ENCODE measurements at regions of chr12 and their contacts with region 1.

Region 1: GRCh38 chr12:121334513-121335343 is 17.5 kb downstream of the ANAPC5 start:
- DNase-seq: peak in 1 of 2 donors; percentile 75
- ATAC-seq: peak; percentile 87 to 98 (median 91)
- H3K4me3 ChIP-seq: no peak overlapping the region
- H3K4me3 Mint-ChIP-seq: no peak overlapping the region
- H3K27ac ChIP-seq: no peak overlapping the region
- H3K27ac Mint-ChIP-seq: peak overlapping the region; percentile 69 to 70
- H3K4me1 ChIP-seq: no peaks in the 10 kb centered on the region
- H3K4me1 Mint-ChIP-seq: peaks cover 0 to 7% of the 10 kb centered on the region in 2 donors
- H3K27me3 ChIP-seq: no peaks in the 10 kb centered on the region
- H3K27me3 Mint-ChIP-seq: no peaks in the 10 kb centered on the region
- CTCF ChIP-seq: peak; percentile 89

Region 2: DNA sequence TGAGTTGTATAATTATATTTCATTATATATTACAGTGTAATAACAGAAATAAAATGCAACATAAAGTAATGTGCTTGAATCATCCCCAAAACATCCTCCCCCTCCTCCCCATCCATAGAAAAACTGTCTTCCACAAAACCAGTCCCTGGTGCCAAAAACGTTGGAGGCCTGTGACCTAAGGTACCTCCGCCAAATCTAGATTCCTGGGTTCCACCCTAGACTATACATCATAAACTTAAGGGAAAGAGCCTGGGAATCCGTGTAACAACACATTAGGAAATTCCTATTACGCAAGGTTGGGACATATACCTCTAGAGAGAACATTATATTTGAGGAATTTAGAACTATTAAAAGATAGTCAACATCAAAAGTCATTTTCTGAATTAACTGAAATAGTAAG is 468.6 kb before region 1 on chr12:
- intact Hi-C with region 1: no loop called
- DNase-seq: no peak
- ATAC-seq: no peak
- H3K4me3 ChIP-seq: no peak overlapping the region
- H3K4me3 Mint-ChIP-seq: no peak overlapping the region
- H3K27ac ChIP-seq: no peak overlapping the region
- H3K27ac Mint-ChIP-seq: no peak overlapping the region
- H3K4me1 ChIP-seq: no peaks in the 10 kb centered on the region
- H3K4me1 Mint-ChIP-seq: peaks cover 39 to 47% of the 10 kb centered on the region in 2 donors
- H3K27me3 ChIP-seq: no peaks in the 10 kb centered on the region
- H3K27me3 Mint-ChIP-seq: no peaks in the 10 kb centered on the region
- CTCF ChIP-seq: no peak

Region 3: GRCh38 chr12:121388421-121388981 is 53.8 kb after region 1 on chr12:
- intact Hi-C with region 1: no loop called
- DNase-seq: no peak
- ATAC-seq: no peak
- H3K4me3 ChIP-seq: no peak overlapping the region
- H3K4me3 Mint-ChIP-seq: no peak overlapping the region
- H3K27ac ChIP-seq: no peak overlapping the region
- H3K27ac Mint-ChIP-seq: no peak overlapping the region
- H3K4me1 ChIP-seq: peaks cover 7% of the 10 kb centered on the region
- H3K4me1 Mint-ChIP-seq: peaks cover 5 to 10% of the 10 kb centered on the region in 2 donors
- H3K27me3 ChIP-seq: no peaks in the 10 kb centered on the region
- H3K27me3 Mint-ChIP-seq: no peaks in the 10 kb centered on the region
- CTCF ChIP-seq: no peak

Region 4: GRCh38 chr12:121399391-121400331 is 64.9 kb after region 1 on chr12 and contains the start of gene RNF34:
- intact Hi-C with region 1: loop called (anchors 1 kb)
- DNase-seq: peak; percentile 94 to 99
- ATAC-seq: peak; percentile 90 to 98 (median 94)
- H3K4me3 ChIP-seq: peak within 1 kb of the TSS; percentile 97
- H3K4me3 Mint-ChIP-seq: peak within 1 kb of the TSS; percentile 98
- H3K27ac ChIP-seq: peak within 1 kb of the TSS; percentile 95
- H3K27ac Mint-ChIP-seq: peak within 1 kb of the TSS; percentile 92 to 94
- H3K4me1 ChIP-seq: peaks cover 13% of the 10 kb centered on the region
- H3K4me1 Mint-ChIP-seq: peaks cover 25 to 35% of the 10 kb centered on the region in 2 donors
- H3K27me3 ChIP-seq: no peaks in the 10 kb centered on the region
- H3K27me3 Mint-ChIP-seq: no peaks in the 10 kb centered on the region
- CTCF ChIP-seq: no peak
- total RNA-seq, gene RNF34: 62.3 to 78.4 (median 73.4) TPM

Region 5: DNA sequence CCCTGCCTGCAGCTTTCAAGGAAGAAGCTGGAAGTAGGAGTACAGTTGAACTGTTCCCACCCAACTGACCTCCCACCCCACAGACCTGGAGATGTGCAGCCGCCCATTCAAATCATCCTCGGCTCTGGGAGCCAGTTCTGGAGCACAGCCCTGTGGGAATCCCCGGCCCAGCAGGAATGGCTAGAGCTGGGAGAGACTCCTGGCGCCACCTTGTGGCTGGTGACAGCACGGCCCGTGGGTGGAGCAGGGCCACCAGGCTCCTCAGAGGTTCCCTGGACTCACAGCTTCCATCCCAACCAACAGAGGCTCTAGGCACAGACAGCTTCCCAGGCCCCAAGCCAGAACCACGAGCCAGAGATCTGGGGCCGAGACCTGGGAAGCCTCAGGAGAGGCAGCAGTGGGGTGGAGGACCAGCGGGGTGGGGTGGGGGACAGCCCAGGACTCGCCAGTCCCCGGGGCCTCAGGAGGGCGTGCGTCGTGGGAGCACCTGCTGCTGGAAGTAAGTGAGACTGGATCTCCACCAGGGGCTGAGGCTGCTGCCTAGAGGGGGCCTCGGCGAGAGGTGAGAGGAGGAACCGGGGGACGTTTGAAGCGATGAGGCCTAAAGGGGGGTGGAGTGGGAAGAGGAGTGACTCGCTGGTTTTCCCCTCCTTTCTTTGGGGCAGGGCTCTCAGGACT is 108.6 kb after region 1 on chr12:
- intact Hi-C with region 1: loop called (anchors 1 kb)
- DNase-seq: peak; percentile 64 to 76
- ATAC-seq: peak; percentile 75 to 85 (median 76)
- H3K4me3 ChIP-seq: no peak overlapping the region
- H3K4me3 Mint-ChIP-seq: no peak overlapping the region
- H3K27ac ChIP-seq: no peak overlapping the region
- H3K27ac Mint-ChIP-seq: no peak overlapping the region
- H3K4me1 ChIP-seq: no peaks in the 10 kb centered on the region
- H3K4me1 Mint-ChIP-seq: peaks cover 0 to under 1% of the 10 kb centered on the region in 2 donors
- H3K27me3 ChIP-seq: no peaks in the 10 kb centered on the region
- H3K27me3 Mint-ChIP-seq: no peaks in the 10 kb centered on the region
- CTCF ChIP-seq: peak; percentile 68

Region 6: GRCh38 chr12:121688966-121689365 is 354.2 kb after region 1 on chr12:
- intact Hi-C with region 1: loop called (anchors 10 kb)
- DNase-seq: no peak
- ATAC-seq: no peak
- H3K4me3 ChIP-seq: no peak overlapping the region
- H3K4me3 Mint-ChIP-seq: no peak overlapping the region
- H3K27ac ChIP-seq: no peak overlapping the region
- H3K27ac Mint-ChIP-seq: peak overlapping the region in 1 of 2 donors; percentile 18
- H3K4me1 ChIP-seq: peaks cover 10% of the 10 kb centered on the region
- H3K4me1 Mint-ChIP-seq: peaks cover 5 to 6% of the 10 kb centered on the region in 2 donors
- H3K27me3 ChIP-seq: no peaks in the 10 kb centered on the region
- H3K27me3 Mint-ChIP-seq: no peaks in the 10 kb centered on the region
- CTCF ChIP-seq: no peak

Measured in natural killer cell (primary cell).